Thyroid gland (tissue), 4 donors: ENCODE measurements at regions of chr4 and their contacts with region 1.

Region 1: DNA sequence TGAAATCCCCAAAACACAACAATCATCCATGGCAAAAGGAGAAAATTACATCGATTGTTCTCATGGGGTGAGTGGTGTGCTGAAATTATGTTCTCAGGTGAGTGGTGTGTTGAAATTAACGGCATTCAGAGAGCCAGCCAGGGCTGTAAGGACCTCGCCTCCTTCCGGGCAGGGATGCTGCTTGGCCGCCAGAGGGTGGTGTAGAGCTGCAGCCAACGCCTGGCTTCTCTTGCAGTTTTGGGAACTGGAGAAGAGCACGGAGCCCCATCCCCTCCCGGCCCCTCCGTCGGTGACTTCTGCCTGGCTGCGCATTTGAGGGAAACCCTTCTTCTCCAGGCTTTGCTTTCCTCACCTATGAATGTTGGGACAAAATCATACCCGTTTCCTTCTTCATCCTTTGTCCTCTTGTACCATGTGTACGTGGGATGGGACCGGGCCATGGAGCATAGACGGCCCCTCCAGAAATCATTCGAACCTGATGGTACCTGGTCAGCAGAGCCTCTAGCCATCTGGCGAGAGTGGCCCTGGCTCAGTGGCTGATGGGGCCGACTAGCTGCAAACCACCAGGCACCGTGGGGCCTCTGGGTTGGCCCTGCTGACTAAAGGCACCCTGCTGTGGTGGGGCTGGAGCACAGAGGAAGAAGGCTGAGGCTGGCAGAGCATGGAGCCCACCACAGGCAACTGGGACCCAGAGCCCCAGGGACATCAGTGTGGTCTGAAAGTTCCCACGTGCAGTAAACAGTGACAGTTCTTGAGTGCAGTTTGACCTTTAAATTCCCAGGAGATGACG is 28.4 kb downstream of the TRMT44 start:
- DNase-seq: peak; percentile 70 to 78
- H3K4me3 ChIP-seq: no peak overlapping the region
- H3K27ac ChIP-seq: peak overlapping the region in 1 of 3 donors; percentile 8
- H3K4me1 ChIP-seq: peaks cover 28 to 42% of the 10 kb centered on the region in 2 donors
- H3K27me3 ChIP-seq: no peaks in the 10 kb centered on the region
- CTCF ChIP-seq: peak; percentile 67 to 97 (median 86)
- POLR2A ChIP-seq: no peak

Region 2: GRCh38 chr4:8506373-8507188 is 37.6 kb after region 1 on chr4:
- intact Hi-C with region 1: loop called (anchors 5 kb)
- DNase-seq: peak; percentile 76 to 83
- H3K4me3 ChIP-seq: no peak overlapping the region
- H3K27ac ChIP-seq: peak overlapping the region; percentile 92 to 97 (median 96)
- H3K4me1 ChIP-seq: peaks cover 48 to 60% of the 10 kb centered on the region in 2 donors
- H3K27me3 ChIP-seq: no peaks in the 10 kb centered on the region
- CTCF ChIP-seq: peak in 2 of 6 experiments; percentile 12 to 35
- POLR2A ChIP-seq: peak in 1 of 2 donors; percentile 8

Region 3: GRCh38 chr4:8547108-8547970 is 78.4 kb after region 1 on chr4:
- intact Hi-C with region 1: loop called (anchors 5 kb)
- DNase-seq: peak; percentile 28 to 34
- H3K4me3 ChIP-seq: no peak overlapping the region
- H3K27ac ChIP-seq: no peak overlapping the region
- H3K4me1 ChIP-seq: no peaks in the 10 kb centered on the region
- H3K27me3 ChIP-seq: no peaks in the 10 kb centered on the region
- CTCF ChIP-seq: peak in 4 of 6 experiments; percentile 28 to 56 (median 49)
- POLR2A ChIP-seq: no peak

Region 4: DNA sequence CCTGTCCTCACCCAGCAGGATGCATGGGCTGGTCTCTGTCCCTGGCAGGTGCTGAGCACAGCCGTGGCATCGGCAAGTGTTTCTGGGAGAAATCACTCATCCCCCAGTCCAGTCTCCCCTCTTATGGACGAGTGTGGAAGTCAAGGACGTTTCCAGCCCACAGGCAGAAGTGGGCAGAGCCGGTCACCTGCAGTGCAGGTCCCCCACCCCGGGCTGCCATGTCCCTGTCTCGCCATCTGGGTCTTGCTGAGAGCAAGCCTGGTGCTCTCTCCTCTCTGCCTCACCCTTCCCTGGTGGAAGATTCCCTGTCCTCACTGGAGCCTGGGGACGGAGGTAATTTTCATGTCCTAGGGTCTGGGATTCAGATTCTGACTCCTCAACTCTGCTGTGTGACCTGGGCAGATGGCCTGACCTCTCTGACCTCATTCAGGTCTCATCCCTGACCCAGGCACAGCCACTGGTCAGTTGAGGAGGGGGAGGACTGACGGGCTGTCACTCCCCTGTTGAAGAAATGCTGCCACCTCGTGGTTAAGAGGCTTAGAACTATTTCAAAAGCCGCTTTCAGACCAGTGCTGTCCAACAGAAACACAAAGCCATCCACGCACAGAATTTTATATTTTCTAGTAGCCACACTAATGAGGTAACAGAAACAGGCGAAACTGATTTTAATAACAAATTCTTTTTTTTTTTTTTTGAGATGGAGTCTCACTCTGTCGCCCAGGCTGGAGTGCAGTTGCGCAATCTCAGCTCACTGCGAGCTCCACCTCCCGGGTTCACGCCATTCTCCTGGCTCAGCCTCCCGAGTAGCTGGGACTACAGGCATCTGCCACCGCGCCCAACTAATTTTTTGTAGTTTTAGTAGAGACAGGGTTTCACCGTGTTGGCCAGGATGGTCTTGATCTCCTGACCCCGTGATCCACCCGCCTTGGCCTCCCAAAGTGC is 125.4 kb after region 1 on chr4:
- intact Hi-C with region 1: loop called (anchors 2 kb)
- DNase-seq: peak; percentile 62 to 73
- H3K4me3 ChIP-seq: no peak overlapping the region
- H3K27ac ChIP-seq: no peak overlapping the region
- H3K4me1 ChIP-seq: peaks cover 11 to 34% of the 10 kb centered on the region in 2 donors
- H3K27me3 ChIP-seq: no peaks in the 10 kb centered on the region
- CTCF ChIP-seq: peak; percentile 49 to 83 (median 68)
- POLR2A ChIP-seq: no peak